Esophagus squamous epithelium (tissue), 5 donors: ENCODE measurements at regions of chr6 and their contacts with region 1.

Region 1: GRCh38 chr6:90478789-90479602 is 107.9 kb downstream of the MAP3K7 start:
- DNase-seq: no peak
- H3K4me3 ChIP-seq: no peak overlapping the region
- H3K27ac ChIP-seq: peak overlapping the region in 1 of 4 donors; percentile 36
- H3K4me1 ChIP-seq: peaks cover 0 to 25% (median 4%) of the 10 kb centered on the region in 3 donors
- H3K27me3 ChIP-seq: no peaks in the 10 kb centered on the region
- CTCF ChIP-seq: peak; percentile 81 to 93 (median 92)
- POLR2A ChIP-seq: no peak

Region 2: GRCh38 chr6:89940225-89941027 is 538.6 kb before region 1 on chr6:
- intact Hi-C with region 1: loop called (anchors 5 kb)
- DNase-seq: no peak
- H3K4me3 ChIP-seq: no peak overlapping the region
- H3K27ac ChIP-seq: no peak overlapping the region
- H3K4me1 ChIP-seq: peaks cover 0 to 20% (median 0%) of the 10 kb centered on the region in 3 donors
- H3K27me3 ChIP-seq: no peaks in the 10 kb centered on the region
- CTCF ChIP-seq: peak in 5 of 6 experiments; percentile 53 to 82 (median 75)
- POLR2A ChIP-seq: no peak